AG04450 (cell line): ENCODE measurements at regions of chr1 and their contacts with region 1.

Region 1: DNA sequence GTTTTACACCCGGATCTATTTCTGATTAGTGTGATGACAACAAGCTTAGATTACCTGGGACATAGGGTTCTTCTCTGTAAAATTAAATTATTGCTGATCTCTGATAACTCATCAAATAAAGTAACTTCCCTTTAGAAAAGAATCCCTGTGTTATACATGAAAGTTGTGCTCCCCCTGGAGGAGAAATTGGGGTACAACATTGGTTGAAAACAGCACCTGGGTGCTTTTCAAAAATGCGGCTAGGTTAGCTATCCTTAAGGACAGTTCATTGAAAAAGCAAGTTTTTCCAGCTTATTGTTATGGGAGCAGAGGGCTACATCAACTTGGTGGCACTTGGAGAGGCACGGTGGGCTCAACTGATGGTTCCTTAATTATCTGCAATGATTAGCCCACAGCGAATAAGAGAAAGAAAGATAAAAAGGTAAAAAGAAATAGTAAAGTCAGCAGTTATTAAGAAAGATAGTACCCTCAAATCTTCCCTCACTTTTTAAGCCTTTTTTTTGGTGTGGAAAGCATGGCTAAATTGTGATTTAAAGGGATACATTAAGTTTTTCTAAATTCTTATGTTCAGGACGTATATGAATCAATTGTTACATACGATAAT is 97.8 kb downstream of the FMN2 start:
- DNase-seq: no peak
- H3K4me3 ChIP-seq: no peak overlapping the region
- H3K27ac ChIP-seq: no peak overlapping the region
- H3K27me3 ChIP-seq: no peaks in the 10 kb centered on the region
- CTCF ChIP-seq: peak; percentile 90

Region 2: DNA sequence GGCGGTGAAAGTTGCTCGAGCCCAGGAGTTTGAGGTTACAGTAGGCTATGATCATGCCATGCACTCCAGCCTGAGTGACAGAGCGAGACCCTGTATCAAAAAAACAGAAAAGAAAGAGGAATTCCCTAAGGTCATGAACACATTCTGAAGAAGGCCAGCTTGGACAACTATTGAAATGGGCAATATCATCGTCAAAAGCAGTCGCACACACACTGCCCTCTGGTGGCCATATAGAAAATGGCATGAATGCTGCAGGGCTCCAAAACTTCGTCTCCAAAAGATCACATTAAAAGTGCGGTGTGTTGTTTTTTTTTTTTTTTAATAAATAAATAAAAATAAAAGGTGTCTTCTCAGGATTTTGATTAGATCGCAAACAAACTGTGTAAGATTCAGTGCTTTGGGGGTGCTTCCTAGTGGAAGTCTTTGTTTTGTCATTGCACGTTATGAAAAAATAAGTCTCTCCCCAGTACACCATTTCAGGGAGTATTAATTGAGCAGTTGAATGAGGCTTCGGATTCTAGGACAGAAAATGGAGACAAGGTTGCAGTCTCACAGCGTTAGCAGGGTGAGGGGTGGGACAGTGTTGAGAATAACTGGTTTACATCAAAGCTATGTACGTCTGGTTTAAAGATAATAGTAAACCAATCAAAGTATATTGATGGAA is 185.3 kb before region 1 on chr1:
- CTCF ChIA-PET with region 1: interaction called, 10 read pairs
- POLR2A ChIA-PET with region 1: interaction called, 3 read pairs
- DNase-seq: no peak
- H3K4me3 ChIP-seq: no peak overlapping the region
- H3K27ac ChIP-seq: no peak overlapping the region
- H3K27me3 ChIP-seq: peaks cover 2% of the 10 kb centered on the region
- CTCF ChIP-seq: peak; percentile 85

Region 3: GRCh38 chr1:240155605-240156004 is 33.9 kb before region 1 on chr1:
- CTCF ChIA-PET with region 1: interaction called, 17 read pairs
- POLR2A ChIA-PET with region 1: no interaction called
- DNase-seq: no peak
- H3K4me3 ChIP-seq: no peak overlapping the region
- H3K27ac ChIP-seq: no peak overlapping the region
- H3K27me3 ChIP-seq: no peaks in the 10 kb centered on the region
- CTCF ChIP-seq: no peak

Region 4: DNA sequence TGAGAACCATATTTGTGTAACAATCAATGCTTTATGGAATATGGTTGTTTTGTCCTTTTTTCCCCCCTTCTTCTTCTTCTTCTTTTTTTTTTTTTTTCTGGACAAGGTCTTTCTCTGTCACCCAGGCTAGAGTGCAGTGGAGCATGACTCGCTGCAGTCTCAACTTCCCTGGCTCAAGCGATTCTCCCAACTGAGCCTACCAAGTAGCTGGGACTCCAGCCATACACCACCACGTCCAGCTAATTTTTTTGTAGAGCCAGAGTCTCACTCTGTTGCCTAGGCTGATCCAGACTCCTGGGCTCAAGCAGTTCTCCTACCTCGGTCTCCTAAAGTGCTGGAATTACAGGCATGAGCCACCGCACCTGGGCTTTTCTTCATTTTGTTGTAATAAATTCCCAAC is 11.1 kb before region 1 on chr1:
- CTCF ChIA-PET with region 1: interaction called, 13 read pairs
- POLR2A ChIA-PET with region 1: no interaction called
- DNase-seq: no peak
- H3K4me3 ChIP-seq: no peak overlapping the region
- H3K27ac ChIP-seq: no peak overlapping the region
- H3K27me3 ChIP-seq: no peaks in the 10 kb centered on the region
- CTCF ChIP-seq: no peak

Region 5: GRCh38 chr1:240399381-240399780 is 209.9 kb after region 1 on chr1:
- CTCF ChIA-PET with region 1: interaction called, 10 read pairs
- POLR2A ChIA-PET with region 1: no interaction called
- DNase-seq: peak; percentile 60
- H3K4me3 ChIP-seq: no peak overlapping the region
- H3K27ac ChIP-seq: no peak overlapping the region
- H3K27me3 ChIP-seq: no peaks in the 10 kb centered on the region
- CTCF ChIP-seq: no peak

Region 6: GRCh38 chr1:240611619-240612480 is 422.4 kb after region 1 on chr1 and contains the start of gene GREM2:
- CTCF ChIA-PET with region 1: interaction called, 10 read pairs
- POLR2A ChIA-PET with region 1: interaction called, 5 read pairs
- DNase-seq: peak; percentile 86
- H3K4me3 ChIP-seq: peak within 1 kb of the TSS; percentile 78
- H3K27ac ChIP-seq: no peak within 1 kb of the TSS
- H3K27me3 ChIP-seq: no peaks in the 10 kb centered on the region
- CTCF ChIP-seq: no peak
- polyA plus RNA-seq, gene GREM2: 2.1 and 2.3 TPM in 2 replicates